ENCODE measurements at regions of chr5 and their contacts with region 1.

Region 1: DNA sequence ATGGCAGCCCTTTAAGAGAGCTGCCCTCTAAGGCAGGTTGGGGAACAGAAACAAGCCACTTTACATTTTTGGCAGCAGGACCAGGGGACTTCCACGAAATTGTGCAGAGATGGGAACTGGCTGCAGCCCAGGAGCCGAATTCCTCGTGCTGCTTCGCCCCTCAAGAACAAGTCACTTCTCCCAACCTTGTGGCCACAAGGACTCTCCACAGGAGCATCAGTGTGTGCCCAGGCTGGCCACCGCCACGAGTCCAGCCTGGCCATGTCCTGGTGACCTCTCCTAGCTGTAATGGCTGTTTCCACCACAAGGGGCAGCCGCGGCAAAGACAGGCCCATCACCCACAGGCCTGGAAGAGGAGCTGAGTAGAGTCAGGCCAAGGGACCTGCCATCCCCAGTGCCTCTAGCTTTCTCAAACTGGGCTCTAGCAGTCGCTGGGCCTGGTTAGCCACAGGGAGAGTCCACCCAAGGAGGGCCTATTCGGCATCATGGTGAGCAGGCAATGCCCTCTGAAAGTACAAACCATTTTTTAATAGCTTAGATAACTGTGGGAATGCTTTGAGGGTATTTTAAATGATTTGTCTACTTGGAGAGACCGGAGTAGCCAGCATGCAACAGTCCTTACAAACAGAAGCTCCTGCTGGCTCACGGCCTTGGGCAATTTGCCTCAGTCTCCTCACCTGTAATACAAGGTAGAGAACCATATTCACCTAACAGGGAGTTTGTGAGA is 129.0 kb downstream of the COL23A1 start:
- DNase-seq: peak; percentile 48
- H3K4me3 ChIP-seq: no peak overlapping the region
- H3K27ac ChIP-seq: no peak overlapping the region
- H3K4me1 ChIP-seq: no peaks in the 10 kb centered on the region
- H3K27me3 ChIP-seq: no peaks in the 10 kb centered on the region
- CTCF ChIP-seq: peak; percentile 42 to 75 (median 62)
- POLR2A ChIP-seq: no peak

Region 2: GRCh38 chr5:178075840-178076548 is 385.2 kb before region 1 on chr5:
- intact Hi-C with region 1: no loop called
- DNase-seq: peak; percentile 63
- H3K4me3 ChIP-seq: no peak overlapping the region
- H3K27ac ChIP-seq: no peak overlapping the region
- H3K4me1 ChIP-seq: no peaks in the 10 kb centered on the region
- H3K27me3 ChIP-seq: no peaks in the 10 kb centered on the region
- CTCF ChIP-seq: peak; percentile 67 to 95 (median 82)
- POLR2A ChIP-seq: no peak

Region 3: GRCh38 chr5:178542455-178542854 is 81.3 kb after region 1 on chr5:
- intact Hi-C with region 1: loop called (anchors 10 kb)
- DNase-seq: no peak
- H3K4me3 ChIP-seq: no peak overlapping the region
- H3K27ac ChIP-seq: no peak overlapping the region
- H3K4me1 ChIP-seq: no peaks in the 10 kb centered on the region
- H3K27me3 ChIP-seq: no peaks in the 10 kb centered on the region
- CTCF ChIP-seq: no peak
- POLR2A ChIP-seq: no peak

Region 4: DNA sequence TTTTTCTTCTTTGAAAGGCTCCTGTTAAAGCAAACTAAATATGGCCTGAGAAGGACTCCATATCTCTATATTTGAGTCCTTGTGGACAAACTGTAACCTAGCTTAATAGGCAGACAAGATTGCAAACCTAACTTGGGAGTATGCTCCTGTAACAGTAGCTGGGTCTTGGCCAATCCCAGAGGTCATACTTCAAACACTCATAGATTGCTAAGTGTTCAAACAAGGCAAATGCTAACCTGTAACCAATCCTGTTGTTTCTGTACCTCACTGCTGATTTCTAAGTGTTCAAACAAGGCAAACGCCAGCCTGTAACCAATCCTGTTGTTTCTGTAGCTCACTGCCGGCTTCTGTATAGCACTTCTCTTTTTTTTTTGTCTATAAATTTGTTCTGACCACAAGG is 216.3 kb after region 1 on chr5:
- intact Hi-C with region 1: no loop called
- DNase-seq: no peak
- H3K4me3 ChIP-seq: no peak overlapping the region
- H3K27ac ChIP-seq: no peak overlapping the region
- H3K4me1 ChIP-seq: no peaks in the 10 kb centered on the region
- H3K27me3 ChIP-seq: no peaks in the 10 kb centered on the region
- CTCF ChIP-seq: no peak
- POLR2A ChIP-seq: no peak

Region 5: GRCh38 chr5:179060116-179061008 is 599.2 kb after region 1 on chr5 and contains the start of gene ZNF354C:
- intact Hi-C with region 1: no loop called
- DNase-seq: peak; percentile 79
- H3K4me3 ChIP-seq: peak within 1 kb of the TSS; percentile 83 to 89
- H3K27ac ChIP-seq: peak within 1 kb of the TSS; percentile 80 to 83
- H3K4me1 ChIP-seq: no peaks in the 10 kb centered on the region
- H3K27me3 ChIP-seq: no peaks in the 10 kb centered on the region
- CTCF ChIP-seq: no peak
- POLR2A ChIP-seq: no peak
- total RNA-seq, gene ZNF354C: 5.7 to 6.5 TPM

Region 6: DNA sequence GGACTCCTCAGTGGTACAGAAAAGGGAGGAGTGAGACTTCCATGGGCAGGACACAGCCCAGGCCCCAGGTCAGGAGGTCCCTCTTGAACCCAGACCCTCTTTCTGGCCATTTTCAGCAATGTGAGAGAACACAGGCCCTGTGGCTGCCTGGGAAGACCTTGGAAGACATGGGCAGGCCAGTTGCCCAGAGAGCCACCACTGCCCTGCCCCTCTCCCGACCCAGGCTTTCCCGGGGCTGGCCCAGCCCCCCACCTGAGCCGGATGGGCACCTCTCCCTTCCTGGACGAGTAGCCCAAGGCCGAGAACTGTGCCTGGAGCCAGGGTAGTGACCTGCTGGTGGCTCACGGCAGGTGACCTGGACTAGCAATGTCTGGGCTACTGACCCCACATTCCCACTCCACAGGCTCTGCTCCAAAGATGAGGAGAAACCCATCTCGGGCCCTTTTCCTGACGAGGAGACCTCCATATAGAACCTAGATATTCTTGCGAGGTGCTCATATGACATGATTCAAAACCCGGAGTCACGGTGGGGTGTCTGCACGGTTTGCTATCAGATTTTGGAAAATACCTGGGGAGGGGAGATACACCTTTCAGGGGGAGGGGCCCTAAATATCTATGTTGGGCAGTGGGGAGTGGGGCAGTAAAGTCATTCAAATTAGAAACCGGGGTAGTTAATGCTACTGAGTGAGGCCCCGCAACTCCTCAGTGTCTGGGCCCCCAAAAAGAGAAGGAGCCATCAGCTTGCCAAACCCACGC is 658.4 kb after region 1 on chr5:
- intact Hi-C with region 1: no loop called
- DNase-seq: no peak
- H3K4me3 ChIP-seq: no peak overlapping the region
- H3K27ac ChIP-seq: no peak overlapping the region
- H3K4me1 ChIP-seq: no peaks in the 10 kb centered on the region
- H3K27me3 ChIP-seq: no peaks in the 10 kb centered on the region
- CTCF ChIP-seq: no peak
- POLR2A ChIP-seq: no peak